ENCODE measurements at regions of chr17 and their contacts with region 1.

Region 1: GRCh38 chr17:79393358-79394202 is 217.3 kb downstream of the RBFOX3 start:
- DNase-seq: peak; percentile 74 to 87 (median 77)
- ATAC-seq: peak; percentile 57 to 88 (median 81)
- H3K4me3 ChIP-seq: no peak overlapping the region
- H3K27ac ChIP-seq: no peak overlapping the region
- H3K4me1 ChIP-seq: no peaks in the 10 kb centered on the region
- H3K27me3 ChIP-seq: peaks cover 17 to 97% (median 67%) of the 10 kb centered on the region in 9 donors
- CTCF ChIP-seq: peak; percentile 81 to 94 (median 88)
- POLR2A ChIP-seq: no peak

Region 2: GRCh38 chr17:78865682-78866390 is 527.7 kb before region 1 on chr17:
- intact Hi-C with region 1: loop called in 1 of 10 experiments (anchors 10 kb)
- DNase-seq: peak; percentile 81 to 87 (median 83)
- ATAC-seq: peak; percentile 64 to 85 (median 78)
- H3K4me3 ChIP-seq: peak overlapping the region in 7 of 12 donors; percentile 11 to 37 (median 31)
- H3K27ac ChIP-seq: peak overlapping the region in 7 of 12 donors; percentile 21 to 56 (median 30)
- H3K4me1 ChIP-seq: peaks cover 0 to 34% (median 11%) of the 10 kb centered on the region in 12 donors
- H3K27me3 ChIP-seq: no peaks in the 10 kb centered on the region
- CTCF ChIP-seq: peak; percentile 85 to 98 (median 94)
- POLR2A ChIP-seq: no peak

Region 3: GRCh38 chr17:79009397-79010308 is 383.9 kb before region 1 on chr17 and contains the start of gene CANT1:
- intact Hi-C with region 1: loop called in 3 of 10 experiments (anchors 10 kb)
- DNase-seq: peak; percentile 86 to 93 (median 88)
- ATAC-seq: peak; percentile 81 to 97 (median 96)
- H3K4me3 ChIP-seq: peak within 1 kb of the TSS; percentile 57 to 100 (median 83)
- H3K27ac ChIP-seq: peak within 1 kb of the TSS; percentile 68 to 94 (median 88)
- H3K4me1 ChIP-seq: peaks cover 7 to 48% (median 33%) of the 10 kb centered on the region in 12 donors
- H3K27me3 ChIP-seq: no peaks in the 10 kb centered on the region
- CTCF ChIP-seq: no peak
- POLR2A ChIP-seq: peak in 1 of 2 donors; percentile 60
- total RNA-seq, gene CANT1: 20.4 to 43.7 (median 24.1) TPM

Region 4: GRCh38 chr17:79045842-79046196 is 347.8 kb before region 1 on chr17:
- intact Hi-C with region 1: loop called in 5 of 10 experiments (anchors 1 to 10 kb)
- DNase-seq: peak; percentile 77 to 89 (median 77)
- ATAC-seq: peak; percentile 60 to 77 (median 68)
- H3K4me3 ChIP-seq: peak overlapping the region in 3 of 12 donors; percentile 11 to 39 (median 27)
- H3K27ac ChIP-seq: peak overlapping the region in 11 of 12 donors; percentile 45 to 76 (median 65)
- H3K4me1 ChIP-seq: peaks cover 6 to 47% (median 24%) of the 10 kb centered on the region in 12 donors
- H3K27me3 ChIP-seq: no peaks in the 10 kb centered on the region
- CTCF ChIP-seq: peak; percentile 92 to 98 (median 95)
- POLR2A ChIP-seq: no peak

Region 5: DNA sequence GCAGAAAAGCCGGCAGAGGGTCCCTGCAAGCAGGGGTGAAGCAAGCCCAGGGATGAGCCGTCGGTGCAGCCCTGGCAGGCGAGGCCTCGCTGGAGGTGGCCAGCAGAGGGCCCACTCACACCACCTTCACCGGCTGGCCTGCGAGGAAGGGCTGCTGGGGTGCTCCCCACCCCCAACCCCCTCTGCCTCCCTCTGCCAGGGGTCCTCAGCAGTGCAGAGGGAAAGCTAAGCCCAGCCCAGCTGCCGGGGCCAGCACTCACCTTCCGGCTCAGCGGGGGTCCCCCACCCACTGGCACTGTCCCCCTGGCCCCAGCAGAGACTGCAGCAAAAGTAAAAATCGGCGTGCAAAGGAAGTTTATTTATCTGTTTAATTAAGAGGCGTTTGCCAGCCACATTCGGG is 205.5 kb before region 1 on chr17:
- intact Hi-C with region 1: loop called (anchors 2 to 5 kb)
- DNase-seq: no peak
- ATAC-seq: peak in 2 of 4 donors; percentile 54 to 70
- H3K4me3 ChIP-seq: no peak overlapping the region
- H3K27ac ChIP-seq: no peak overlapping the region
- H3K4me1 ChIP-seq: peaks cover 0 to 11% (median 0%) of the 10 kb centered on the region in 12 donors
- H3K27me3 ChIP-seq: peaks cover 37 to 100% (median 58%) of the 10 kb centered on the region in 9 donors
- CTCF ChIP-seq: peak; percentile 19 to 60 (median 40)
- POLR2A ChIP-seq: no peak

Region 6: DNA sequence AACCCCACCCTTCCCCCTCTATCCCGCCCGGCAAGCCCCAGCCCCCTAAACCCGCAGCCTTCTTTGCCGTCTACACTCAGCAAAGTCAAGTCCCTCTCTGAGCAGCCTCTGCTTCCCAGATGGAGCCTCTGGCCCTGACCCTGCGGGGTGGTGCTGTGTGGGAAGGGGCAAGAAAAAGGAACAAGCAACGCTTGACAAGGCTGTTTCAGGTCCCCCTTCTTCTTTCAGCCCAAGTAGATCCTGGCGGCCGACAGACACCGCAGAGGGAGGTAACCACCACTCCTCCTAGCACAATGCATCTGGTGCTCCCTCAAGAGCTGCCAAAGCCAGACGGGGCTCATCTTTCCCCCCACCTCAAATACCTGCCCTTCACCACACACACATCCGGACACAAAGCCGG is 140.7 kb before region 1 on chr17:
- intact Hi-C with region 1: no loop called
- DNase-seq: no peak
- ATAC-seq: no peak
- H3K4me3 ChIP-seq: no peak overlapping the region
- H3K27ac ChIP-seq: no peak overlapping the region
- H3K4me1 ChIP-seq: no peaks in the 10 kb centered on the region
- H3K27me3 ChIP-seq: peaks cover 0 to 64% (median 22%) of the 10 kb centered on the region in 9 donors
- CTCF ChIP-seq: no peak
- POLR2A ChIP-seq: no peak